ENCODE measurements at regions of chr17 and their contacts with region 1.

Region 1: DNA sequence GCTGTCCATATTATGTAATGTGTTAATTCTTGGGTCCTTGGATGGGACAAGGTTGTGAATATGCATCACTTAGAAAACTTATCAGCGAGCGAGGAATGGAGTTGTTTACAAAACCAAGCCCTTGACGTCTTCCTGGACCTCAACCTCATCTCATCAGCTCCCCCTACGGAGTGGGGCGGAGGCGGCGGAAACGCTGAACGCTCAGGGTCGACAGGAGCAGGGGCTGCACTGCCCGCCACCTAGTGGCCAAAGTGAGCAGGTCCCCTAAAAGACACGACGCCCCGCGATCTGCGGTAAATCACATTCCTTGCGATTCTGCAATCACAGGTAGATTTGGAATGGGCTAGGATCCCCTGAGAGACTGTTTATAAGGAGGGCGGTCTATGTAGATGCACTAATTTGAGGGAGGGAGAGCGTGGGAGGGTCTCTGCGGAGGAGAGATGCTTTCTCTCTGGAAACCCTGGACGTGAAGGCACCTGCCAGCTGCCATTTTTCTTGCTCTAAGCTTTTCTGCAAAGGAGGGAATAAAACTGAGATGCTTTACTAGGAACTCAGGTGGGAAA is 5.4 kb upstream of the ICAM2 start:
- DNase-seq: peak; percentile 91 to 97 (median 95)
- H3K4me3 ChIP-seq: peak overlapping the region; percentile 58
- H3K4me3 Mint-ChIP-seq: peak overlapping the region; percentile 51 to 94 (median 82)
- H3K27ac ChIP-seq: peak overlapping the region; percentile 81
- H3K27ac Mint-ChIP-seq: peak overlapping the region; percentile 94 to 100 (median 98)
- H3K4me1 ChIP-seq: peaks cover 67% of the 10 kb centered on the region
- H3K4me1 Mint-ChIP-seq: peaks cover 51 to 74% (median 70%) of the 10 kb centered on the region in 3 donors
- H3K27me3 ChIP-seq: no peaks in the 10 kb centered on the region
- H3K27me3 Mint-ChIP-seq: peaks cover 0 to under 1% of the 10 kb centered on the region in 2 donors

Region 2: GRCh38 chr17:63919311-63919723 is 106.5 kb before region 1 on chr17:
- CTCF ChIA-PET with region 1: interaction called, 212 read pairs
- POLR2A ChIA-PET with region 1: interaction called, 13 read pairs
- DNase-seq: peak; percentile 57 to 81 (median 71)
- H3K4me3 ChIP-seq: no peak overlapping the region
- H3K4me3 Mint-ChIP-seq: no peak overlapping the region
- H3K27ac ChIP-seq: no peak overlapping the region
- H3K27ac Mint-ChIP-seq: peak overlapping the region in 5 of 8 donors; percentile 17 to 78 (median 63)
- H3K4me1 ChIP-seq: peaks cover 8% of the 10 kb centered on the region
- H3K4me1 Mint-ChIP-seq: peaks cover 6 to 10% (median 10%) of the 10 kb centered on the region in 3 donors
- H3K27me3 ChIP-seq: no peaks in the 10 kb centered on the region
- H3K27me3 Mint-ChIP-seq: peaks cover 0 to 3% of the 10 kb centered on the region in 2 donors

Region 3: DNA sequence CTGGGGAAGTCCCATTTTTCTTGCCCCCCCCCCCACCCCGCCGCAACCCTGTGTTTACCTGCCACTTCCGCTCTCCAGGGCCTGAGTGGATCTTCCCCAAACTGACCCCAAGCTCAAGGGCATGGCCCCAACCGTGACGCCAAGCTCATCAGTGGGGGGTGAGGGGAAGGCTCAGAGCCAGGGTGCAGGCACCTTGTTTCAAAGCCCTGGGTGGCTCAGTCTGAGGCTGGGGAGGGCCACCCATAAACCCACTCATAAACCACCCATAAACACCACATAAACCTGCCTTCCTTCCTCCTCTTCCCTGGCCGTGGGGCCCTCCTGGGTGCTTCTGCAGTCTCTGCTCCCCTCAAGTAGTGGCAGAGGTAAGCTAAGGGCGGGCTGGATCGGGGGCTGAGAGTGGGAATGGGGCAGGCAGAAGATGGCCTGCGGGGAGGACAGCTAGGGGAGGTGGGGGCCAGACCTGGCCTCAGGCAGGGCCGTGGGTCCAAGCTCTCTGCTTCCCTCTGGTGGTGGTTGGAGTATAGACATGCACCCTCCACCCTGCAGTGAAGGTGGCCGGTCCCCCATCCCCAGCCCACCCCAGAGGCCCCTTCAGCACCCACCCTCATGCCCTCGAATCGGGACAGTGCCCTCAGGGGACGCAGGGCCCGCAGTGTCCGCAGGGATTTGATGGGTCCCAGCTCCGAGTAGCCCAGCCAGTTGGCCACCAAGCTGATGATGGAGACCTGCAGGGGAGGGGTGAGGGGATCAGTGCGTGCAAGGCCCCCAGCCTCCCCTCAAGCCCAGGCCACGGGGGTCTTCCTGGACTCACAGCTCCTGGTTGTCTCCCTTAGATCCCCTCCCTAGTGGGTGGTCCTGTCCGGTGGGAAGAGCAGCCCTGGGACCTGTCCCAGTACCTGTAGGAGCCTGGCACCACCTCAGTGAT is 79.1 kb before region 1 on chr17:
- CTCF ChIA-PET with region 1: interaction called, 48 read pairs
- POLR2A ChIA-PET with region 1: interaction called, 7 read pairs
- DNase-seq: peak; percentile 25 to 67 (median 63)
- H3K4me3 ChIP-seq: peak overlapping the region; percentile 39
- H3K4me3 Mint-ChIP-seq: peak overlapping the region; percentile 31 to 87 (median 83)
- H3K27ac ChIP-seq: no peak overlapping the region
- H3K27ac Mint-ChIP-seq: peak overlapping the region in 6 of 8 donors; percentile 32 to 75 (median 62)
- H3K4me1 ChIP-seq: peaks cover 23% of the 10 kb centered on the region
- H3K4me1 Mint-ChIP-seq: peaks cover 15 to 31% (median 22%) of the 10 kb centered on the region in 3 donors
- H3K27me3 ChIP-seq: no peaks in the 10 kb centered on the region
- H3K27me3 Mint-ChIP-seq: no peaks in the 10 kb centered on the region

Region 4: DNA sequence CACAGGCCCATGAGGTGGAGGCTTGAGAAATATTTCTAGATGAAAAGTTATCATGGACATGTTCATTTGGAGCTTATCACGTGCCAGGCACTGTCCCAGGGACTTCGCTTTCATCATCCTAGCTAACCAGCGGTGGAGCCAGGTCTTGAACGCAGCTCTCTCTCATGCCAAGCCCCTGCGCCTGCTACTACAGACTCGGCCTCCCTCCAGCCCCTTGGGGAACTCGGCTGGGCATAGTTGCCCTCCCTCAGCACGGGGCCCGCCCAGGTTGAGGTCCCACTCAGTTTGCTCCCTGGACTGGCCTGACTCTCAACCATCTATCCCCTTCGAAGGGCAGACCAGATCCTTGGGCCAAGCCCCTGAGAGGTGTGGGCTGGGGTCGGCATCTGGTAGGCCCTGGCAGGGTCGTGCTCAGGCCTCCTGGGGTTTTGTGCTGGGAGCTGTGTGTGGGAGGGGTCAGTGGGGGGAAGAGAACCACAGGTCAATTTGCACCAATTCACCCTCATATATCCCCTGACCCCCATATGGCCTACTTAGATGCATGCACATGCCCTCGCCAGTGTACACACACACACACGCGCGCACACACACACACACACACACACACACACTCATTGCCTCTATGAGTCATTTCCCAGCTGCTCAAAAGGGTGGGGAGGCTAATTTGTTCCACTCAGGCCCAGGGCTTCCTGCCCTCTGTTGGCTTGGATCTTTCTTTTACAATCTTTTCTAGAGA is 41.0 kb before region 1 on chr17:
- CTCF ChIA-PET with region 1: interaction called, 246 read pairs
- POLR2A ChIA-PET with region 1: interaction called, 3 read pairs
- DNase-seq: peak in 4 of 5 donors; percentile 51 to 64 (median 59)
- H3K4me3 ChIP-seq: no peak overlapping the region
- H3K4me3 Mint-ChIP-seq: peak overlapping the region in 6 of 7 donors; percentile 3 to 61 (median 30)
- H3K27ac ChIP-seq: no peak overlapping the region
- H3K27ac Mint-ChIP-seq: peak overlapping the region; percentile 61 to 78 (median 75)
- H3K4me1 ChIP-seq: peaks cover 11% of the 10 kb centered on the region
- H3K4me1 Mint-ChIP-seq: peaks cover 20 to 26% (median 24%) of the 10 kb centered on the region in 3 donors
- H3K27me3 ChIP-seq: no peaks in the 10 kb centered on the region
- H3K27me3 Mint-ChIP-seq: no peaks in the 10 kb centered on the region

Region 5: GRCh38 chr17:64005734-64006167 is 20.1 kb before region 1 on chr17:
- CTCF ChIA-PET with region 1: interaction called, 246 read pairs
- POLR2A ChIA-PET with region 1: interaction called, 67 read pairs
- DNase-seq: no peak
- H3K4me3 ChIP-seq: no peak overlapping the region
- H3K4me3 Mint-ChIP-seq: peak overlapping the region in 1 of 7 donors; percentile 4
- H3K27ac ChIP-seq: peak overlapping the region; percentile 72
- H3K27ac Mint-ChIP-seq: peak overlapping the region in 7 of 8 donors; percentile 29 to 93 (median 58)
- H3K4me1 ChIP-seq: peaks cover 42% of the 10 kb centered on the region
- H3K4me1 Mint-ChIP-seq: peaks cover 42 to 53% (median 44%) of the 10 kb centered on the region in 3 donors
- H3K27me3 ChIP-seq: no peaks in the 10 kb centered on the region
- H3K27me3 Mint-ChIP-seq: no peaks in the 10 kb centered on the region

Region 6: DNA sequence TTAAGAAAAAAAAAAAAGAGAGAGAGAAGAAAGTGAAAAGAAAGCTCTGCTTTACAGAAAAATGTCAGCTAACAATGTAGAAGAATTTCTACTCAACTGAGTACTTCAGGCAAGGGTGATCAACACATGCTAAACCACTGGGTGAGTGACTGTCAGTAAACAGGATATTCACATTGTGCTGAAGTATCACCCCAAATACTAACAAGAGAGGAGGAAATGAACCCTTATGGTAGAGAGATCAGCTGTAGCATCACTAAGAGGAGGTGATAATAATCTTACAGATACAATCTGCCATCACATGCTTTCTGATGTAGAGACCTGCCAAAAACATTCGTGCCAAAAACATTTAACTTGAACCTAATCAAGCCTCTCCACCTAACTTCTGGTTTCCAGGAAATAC is 25.3 kb after region 1 on chr17:
- CTCF ChIA-PET with region 1: interaction called, 33 read pairs
- POLR2A ChIA-PET with region 1: interaction called, 12 read pairs
- DNase-seq: peak in 2 of 5 donors; percentile 53 to 66
- H3K4me3 ChIP-seq: peak overlapping the region; percentile 35
- H3K4me3 Mint-ChIP-seq: peak overlapping the region in 6 of 7 donors; percentile 21 to 84 (median 70)
- H3K27ac ChIP-seq: peak overlapping the region; percentile 38
- H3K27ac Mint-ChIP-seq: peak overlapping the region; percentile 61 to 96 (median 92)
- H3K4me1 ChIP-seq: peaks cover 45% of the 10 kb centered on the region
- H3K4me1 Mint-ChIP-seq: peaks cover 47 to 65% (median 60%) of the 10 kb centered on the region in 3 donors
- H3K27me3 ChIP-seq: no peaks in the 10 kb centered on the region
- H3K27me3 Mint-ChIP-seq: no peaks in the 10 kb centered on the region

Region 7: GRCh38 chr17:64145757-64146417 is 120.1 kb after region 1 on chr17:
- CTCF ChIA-PET with region 1: interaction called, 13 read pairs
- POLR2A ChIA-PET with region 1: interaction called, 36 read pairs
- DNase-seq: peak; percentile 89 to 98 (median 95)
- H3K4me3 ChIP-seq: peak overlapping the region; percentile 86
- H3K4me3 Mint-ChIP-seq: no peak overlapping the region
- H3K27ac ChIP-seq: peak overlapping the region; percentile 83
- H3K27ac Mint-ChIP-seq: no peak overlapping the region
- H3K4me1 ChIP-seq: peaks cover 25% of the 10 kb centered on the region
- H3K4me1 Mint-ChIP-seq: peaks cover 20 to 26% (median 26%) of the 10 kb centered on the region in 3 donors
- H3K27me3 ChIP-seq: no peaks in the 10 kb centered on the region
- H3K27me3 Mint-ChIP-seq: no peaks in the 10 kb centered on the region

Region 8: DNA sequence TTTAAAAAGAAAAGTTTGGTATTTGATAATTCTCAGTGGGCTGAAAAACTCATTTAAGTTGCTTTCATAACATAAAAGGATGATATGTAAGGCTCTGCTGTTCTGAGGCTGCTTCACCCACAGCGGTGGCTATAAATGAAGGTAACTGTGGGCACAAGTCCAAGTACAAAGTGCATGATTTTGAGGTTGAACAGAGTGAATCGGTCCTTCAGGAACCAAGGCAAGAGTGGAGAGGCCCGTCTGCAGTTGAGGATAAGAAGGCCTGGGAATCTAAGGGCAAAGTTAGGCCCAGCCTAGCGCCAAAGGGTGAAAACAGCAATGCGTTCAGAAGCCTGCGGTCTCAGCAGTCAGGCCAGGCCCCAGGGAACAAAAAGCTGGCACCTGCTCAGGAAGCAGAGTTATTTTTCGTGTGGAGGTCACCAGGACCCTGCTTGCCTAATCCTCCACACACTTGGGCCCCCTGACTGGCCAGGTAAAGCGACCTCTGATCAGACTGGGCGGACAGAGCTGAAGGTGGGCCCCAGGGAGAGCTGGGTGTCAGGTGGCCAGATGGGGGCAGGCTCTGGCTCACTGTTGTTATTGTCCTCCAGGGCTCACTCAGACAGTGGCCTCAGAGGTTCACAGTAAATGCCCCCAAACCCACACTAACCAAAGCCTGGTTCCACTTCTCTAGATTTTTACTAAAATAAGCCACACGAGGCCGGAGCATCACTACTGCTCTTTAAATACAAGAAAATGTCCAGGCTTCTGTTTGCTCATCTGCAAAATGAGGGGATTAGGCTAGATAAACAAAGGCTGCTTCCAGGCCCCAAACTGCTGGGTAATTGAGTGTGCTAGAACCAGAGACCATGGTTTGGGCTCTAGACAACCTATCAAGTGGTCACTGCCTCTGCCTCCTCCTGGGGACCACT is 190.8 kb after region 1 on chr17:
- CTCF ChIA-PET with region 1: no interaction called
- POLR2A ChIA-PET with region 1: no interaction called
- DNase-seq: no peak
- H3K4me3 ChIP-seq: no peak overlapping the region
- H3K4me3 Mint-ChIP-seq: no peak overlapping the region
- H3K27ac ChIP-seq: no peak overlapping the region
- H3K27ac Mint-ChIP-seq: peak overlapping the region in 1 of 8 donors; percentile 29
- H3K4me1 ChIP-seq: no peaks in the 10 kb centered on the region
- H3K4me1 Mint-ChIP-seq: peaks cover 6 to 21% (median 14%) of the 10 kb centered on the region in 3 donors
- H3K27me3 ChIP-seq: no peaks in the 10 kb centered on the region
- H3K27me3 Mint-ChIP-seq: peaks cover 0 to 1% of the 10 kb centered on the region in 2 donors